Psoas muscle (tissue), 8 donors: ENCODE measurements at regions of chr5 and their contacts with region 1.

Region 1: GRCh38 chr5:112878760-112879159 is 17.7 kb downstream of the SRP19 start:
- DNase-seq: no peak
- ATAC-seq: no peak
- H3K4me3 ChIP-seq: no peak overlapping the region
- H3K27ac ChIP-seq: no peak overlapping the region
- H3K4me1 ChIP-seq: peaks cover 4% of the 10 kb centered on the region
- H3K27me3 ChIP-seq: no peaks in the 10 kb centered on the region
- CTCF ChIP-seq: no peak

Region 2: DNA sequence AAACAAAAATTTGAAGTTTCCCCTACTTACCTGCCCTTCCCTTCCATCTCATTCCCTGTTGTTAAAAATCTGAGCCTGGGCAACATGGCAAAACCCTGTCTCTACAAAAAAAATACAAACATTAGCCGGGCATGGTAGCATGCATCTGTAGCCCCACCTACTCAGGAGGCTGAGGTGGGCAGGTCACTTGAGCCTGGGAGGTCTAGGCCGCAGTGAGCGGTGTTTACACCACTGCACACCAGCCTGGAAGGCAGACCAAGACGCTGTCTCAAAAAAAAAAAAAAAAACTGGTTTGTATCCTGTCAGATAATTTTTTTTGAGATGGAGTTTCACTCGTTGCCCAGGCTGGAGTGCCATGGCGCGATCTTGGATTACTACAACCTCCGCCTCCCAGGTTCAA is 59.5 kb after region 1 on chr5:
- intact Hi-C with region 1: loop called in 1 of 2 experiments (anchors 2 kb)
- DNase-seq: no peak
- ATAC-seq: no peak
- H3K4me3 ChIP-seq: no peak overlapping the region
- H3K27ac ChIP-seq: no peak overlapping the region
- H3K4me1 ChIP-seq: no peaks in the 10 kb centered on the region
- H3K27me3 ChIP-seq: no peaks in the 10 kb centered on the region
- CTCF ChIP-seq: no peak